A549 (cell line): ENCODE measurements at regions of chr6 and their contacts with region 1.

Region 1: GRCh38 chr6:12605888-12606345 is 110.7 kb upstream of the PHACTR1 start:
- DNase-seq: peak; percentile 23 to 83
- ATAC-seq: peak; percentile 69 to 83; a peak in 5 of 6 replicates
- H3K4me3 ChIP-seq: no peak overlapping the region
- H3K27ac ChIP-seq: peak overlapping the region; percentile 69 to 87; a peak in 4 of 6 replicates
- H3K4me1 ChIP-seq: peaks cover 55% of the 10 kb centered on the region
- CTCF ChIP-seq: peak; percentile 79
- EP300 ChIP-seq: no peak
- POLR2A ChIP-seq: no peak
- RAD21 ChIP-seq: peak; percentile 78 to 85

Region 2: GRCh38 chr6:12483712-12484111 is 122.2 kb before region 1 on chr6:
- CTCF ChIA-PET with region 1: interaction called, 18 read pairs
- POLR2A ChIA-PET with region 1: no interaction called
- DNase-seq: peak; percentile 30 to 95
- ATAC-seq: peak; percentile 86 to 93
- H3K4me3 ChIP-seq: peak overlapping the region; percentile 22; the same call in 1 of the 3 replicates
- H3K27ac ChIP-seq: peak overlapping the region; percentile 92 to 98
- H3K4me1 ChIP-seq: peaks cover 54% of the 10 kb centered on the region
- CTCF ChIP-seq: no peak
- EP300 ChIP-seq: peak; percentile 75 to 79; a peak in 4 of 5 replicates
- POLR2A ChIP-seq: no peak
- RAD21 ChIP-seq: peak; percentile 39 to 45

Region 3: DNA sequence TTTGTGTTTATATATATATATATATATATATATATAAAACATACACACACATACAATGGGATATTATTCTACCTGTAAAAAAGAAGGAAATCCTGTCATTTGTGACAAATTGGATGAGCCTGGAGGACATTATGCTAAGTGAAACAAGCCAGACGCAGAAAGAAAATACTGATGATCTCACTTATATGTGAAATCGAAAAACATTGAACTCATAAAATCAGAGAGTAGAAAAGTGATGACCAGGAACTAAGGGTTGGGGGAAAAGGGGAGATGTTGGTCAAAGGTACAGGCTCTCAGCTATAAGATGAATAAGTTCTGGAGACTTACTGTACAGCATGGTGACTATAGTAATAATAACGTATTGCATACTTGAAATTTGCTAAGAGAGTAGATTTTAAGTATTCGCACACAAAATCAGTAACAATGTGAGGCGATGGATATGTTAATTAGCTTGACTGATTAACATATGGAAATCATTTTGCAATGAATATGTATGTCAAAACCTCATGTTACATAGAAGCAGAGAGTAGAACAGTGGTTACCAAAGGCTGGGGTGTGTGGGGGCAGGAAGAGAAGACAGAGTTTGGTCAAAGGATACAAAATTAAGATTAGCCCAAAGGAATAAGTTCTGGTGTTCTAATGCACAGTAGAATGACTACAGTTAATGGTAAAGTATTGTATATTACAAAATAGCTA is 18.4 kb after region 1 on chr6:
- CTCF ChIA-PET with region 1: no interaction called
- POLR2A ChIA-PET with region 1: no interaction called
- DNase-seq: no peak
- ATAC-seq: no peak
- H3K4me3 ChIP-seq: no peak overlapping the region
- H3K27ac ChIP-seq: no peak overlapping the region
- H3K4me1 ChIP-seq: no peaks in the 10 kb centered on the region
- CTCF ChIP-seq: no peak
- EP300 ChIP-seq: no peak
- POLR2A ChIP-seq: no peak
- RAD21 ChIP-seq: no peak

Region 4: DNA sequence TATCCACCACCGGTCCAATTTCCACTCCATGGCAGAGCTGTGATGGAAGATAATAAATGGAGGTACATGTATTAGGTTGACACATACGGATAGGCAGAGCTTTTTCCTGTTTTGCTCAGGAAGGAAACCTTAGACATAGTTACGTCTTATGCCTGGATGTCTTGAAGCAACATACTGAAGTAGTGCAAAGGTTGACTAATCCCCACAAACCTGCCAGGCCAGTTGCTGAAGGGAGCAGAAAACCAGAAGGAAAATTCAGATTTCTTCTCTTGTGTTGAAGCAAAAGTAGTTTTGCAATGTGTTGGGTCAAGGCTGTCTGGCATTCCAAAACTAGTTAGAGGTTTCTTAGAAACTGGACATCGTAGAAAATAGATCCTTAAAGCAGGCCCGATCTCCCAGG is 179.4 kb after region 1 on chr6:
- CTCF ChIA-PET with region 1: no interaction called
- POLR2A ChIA-PET with region 1: no interaction called
- DNase-seq: no peak
- ATAC-seq: no peak
- H3K4me3 ChIP-seq: no peak overlapping the region
- H3K27ac ChIP-seq: no peak overlapping the region
- H3K4me1 ChIP-seq: no peaks in the 10 kb centered on the region
- CTCF ChIP-seq: no peak
- EP300 ChIP-seq: no peak
- POLR2A ChIP-seq: no peak
- RAD21 ChIP-seq: no peak